ENCODE measurements at regions of chr1 and their contacts with region 1.

Region 1: GRCh38 chr1:42965378-42965777 is 6.7 kb upstream of the SLC2A1 start:
- DNase-seq: no peak
- ATAC-seq: no peak
- H3K4me3 Mint-ChIP-seq: no peak overlapping the region
- H3K27ac Mint-ChIP-seq: no peak overlapping the region
- H3K4me1 Mint-ChIP-seq: peaks cover 27% of the 10 kb centered on the region
- H3K27me3 Mint-ChIP-seq: no peaks in the 10 kb centered on the region
- CTCF ChIP-seq: no peak

Region 2: GRCh38 chr1:42941640-42942330 is 23.6 kb before region 1 on chr1:
- CTCF ChIA-PET with region 1: interaction called, 3 read pairs
- POLR2A ChIA-PET with region 1: interaction called, 694 read pairs
- intact Hi-C with region 1: no loop called
- DNase-seq: no peak
- ATAC-seq: no peak
- H3K4me3 Mint-ChIP-seq: no peak overlapping the region
- H3K27ac Mint-ChIP-seq: peak overlapping the region; percentile 91
- H3K4me1 Mint-ChIP-seq: peaks cover 100% of the 10 kb centered on the region
- H3K27me3 Mint-ChIP-seq: no peaks in the 10 kb centered on the region
- CTCF ChIP-seq: no peak

Measured in activated B cell treated with CpG ODN at 0.5 μM for 24 hours (primary cell).